GM12878 (cell line): ENCODE measurements at regions of chrX and their contacts with region 1.

Region 1: GRCh38 chrX:57329008-57329407 is 42.5 kb downstream of the FAAH2 start:
- DNase-seq: no peak
- ATAC-seq: no peak
- H3K4me3 ChIP-seq: no peak overlapping the region
- H3K27ac ChIP-seq: no peak overlapping the region
- H3K4me1 ChIP-seq: no peaks in the 10 kb centered on the region
- H3K27me3 ChIP-seq: no peaks in the 10 kb centered on the region
- CTCF ChIP-seq: peak in 2 of 3 experiments; percentile 18 to 19; a peak in 1 of 6 replicates
- EP300 ChIP-seq: no peak
- POLR2A ChIP-seq: no peak
- RAD21 ChIP-seq: no peak

Region 2: GRCh38 chrX:56572975-56573374 is 756.0 kb before region 1 on chrX:
- CTCF ChIA-PET with region 1: no interaction called
- POLR2A ChIA-PET with region 1: no interaction called
- RAD21 ChIA-PET with region 1: no interaction called
- SMC1A ChIA-PET with region 1: no interaction called
- in situ Hi-C with region 1: no loop called
- intact Hi-C with region 1: no loop called
- DNase-seq: no peak
- ATAC-seq: no peak
- H3K4me3 ChIP-seq: no peak overlapping the region
- H3K27ac ChIP-seq: no peak overlapping the region
- H3K4me1 ChIP-seq: no peaks in the 10 kb centered on the region
- H3K27me3 ChIP-seq: no peaks in the 10 kb centered on the region
- CTCF ChIP-seq: no peak
- EP300 ChIP-seq: no peak
- POLR2A ChIP-seq: no peak
- RAD21 ChIP-seq: no peak

Region 3: GRCh38 chrX:57417827-57418226 is 88.8 kb after region 1 on chrX:
- CTCF ChIA-PET with region 1: no interaction called
- POLR2A ChIA-PET with region 1: no interaction called
- RAD21 ChIA-PET with region 1: no interaction called
- SMC1A ChIA-PET with region 1: no interaction called
- in situ Hi-C with region 1: no loop called
- intact Hi-C with region 1: loop called (anchors 10 kb)
- DNase-seq: peak; percentile 4
- ATAC-seq: peak; percentile 82
- H3K4me3 ChIP-seq: no peak overlapping the region
- H3K27ac ChIP-seq: no peak overlapping the region
- H3K4me1 ChIP-seq: no peaks in the 10 kb centered on the region
- H3K27me3 ChIP-seq: no peaks in the 10 kb centered on the region
- CTCF ChIP-seq: no peak
- EP300 ChIP-seq: no peak
- POLR2A ChIP-seq: no peak
- RAD21 ChIP-seq: no peak